Activated CD8-positive, alpha-beta memory T cell treated with anti-CD3 and anti-CD28 coated beads, Interleukin-2, amount 10 ng/mL, durations not matched to agents 7 days and 5 days (primary cell): ENCODE measurements at regions of chr5 and their contacts with region 1.

Region 1: DNA sequence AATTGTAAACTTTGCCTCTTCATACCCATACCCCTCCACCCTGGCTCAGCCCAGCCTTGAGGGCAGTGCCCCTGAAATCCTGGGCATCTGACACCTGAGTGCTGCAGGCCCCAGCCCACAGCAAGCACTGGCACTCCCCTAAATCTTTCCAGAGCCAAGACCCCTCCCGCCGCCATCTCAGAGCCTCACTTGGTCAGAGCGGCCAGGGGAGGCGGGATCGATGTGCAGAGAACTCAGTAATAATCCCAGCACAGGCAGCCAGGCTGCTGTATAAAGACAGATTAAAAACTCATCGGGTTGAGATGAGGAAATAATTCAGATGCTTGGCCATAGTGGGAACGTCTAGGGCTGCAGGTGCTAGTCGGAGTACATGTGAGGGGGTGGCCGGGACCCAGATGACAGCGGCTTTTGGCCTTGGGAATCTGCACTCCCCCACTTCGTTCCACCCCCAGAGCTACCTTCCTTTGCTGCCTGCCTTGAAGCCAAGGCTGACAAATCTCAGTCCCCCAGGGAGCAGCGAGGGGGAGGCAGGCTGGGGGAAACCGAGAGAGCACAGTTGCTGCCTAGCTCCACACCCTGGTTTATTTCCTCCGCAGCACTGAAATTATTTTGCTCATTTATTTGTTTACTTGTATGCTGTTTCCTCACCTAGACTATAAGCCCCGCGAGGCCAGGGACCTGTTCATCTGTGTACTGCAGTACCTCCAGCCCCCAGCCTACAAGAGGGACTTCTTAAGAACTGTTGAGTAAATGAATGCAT is 19.5 kb upstream of the ARAP3 start:
- DNase-seq: no peak
- ATAC-seq: peak; percentile 28
- H3K4me3 Mint-ChIP-seq: peak overlapping the region; percentile 62
- H3K27ac Mint-ChIP-seq: no peak overlapping the region
- H3K4me1 Mint-ChIP-seq: peaks cover 22% of the 10 kb centered on the region
- H3K27me3 Mint-ChIP-seq: peaks cover 42% of the 10 kb centered on the region

Region 2: GRCh38 chr5:141811287-141812155 is 110.0 kb after region 1 on chr5:
- CTCF ChIA-PET with region 1: interaction called, 74 read pairs
- DNase-seq: peak; percentile 49
- ATAC-seq: peak; percentile 75
- H3K4me3 Mint-ChIP-seq: no peak overlapping the region
- H3K27ac Mint-ChIP-seq: no peak overlapping the region
- H3K4me1 Mint-ChIP-seq: peaks cover 5% of the 10 kb centered on the region
- H3K27me3 Mint-ChIP-seq: peaks cover 64% of the 10 kb centered on the region

Region 3: DNA sequence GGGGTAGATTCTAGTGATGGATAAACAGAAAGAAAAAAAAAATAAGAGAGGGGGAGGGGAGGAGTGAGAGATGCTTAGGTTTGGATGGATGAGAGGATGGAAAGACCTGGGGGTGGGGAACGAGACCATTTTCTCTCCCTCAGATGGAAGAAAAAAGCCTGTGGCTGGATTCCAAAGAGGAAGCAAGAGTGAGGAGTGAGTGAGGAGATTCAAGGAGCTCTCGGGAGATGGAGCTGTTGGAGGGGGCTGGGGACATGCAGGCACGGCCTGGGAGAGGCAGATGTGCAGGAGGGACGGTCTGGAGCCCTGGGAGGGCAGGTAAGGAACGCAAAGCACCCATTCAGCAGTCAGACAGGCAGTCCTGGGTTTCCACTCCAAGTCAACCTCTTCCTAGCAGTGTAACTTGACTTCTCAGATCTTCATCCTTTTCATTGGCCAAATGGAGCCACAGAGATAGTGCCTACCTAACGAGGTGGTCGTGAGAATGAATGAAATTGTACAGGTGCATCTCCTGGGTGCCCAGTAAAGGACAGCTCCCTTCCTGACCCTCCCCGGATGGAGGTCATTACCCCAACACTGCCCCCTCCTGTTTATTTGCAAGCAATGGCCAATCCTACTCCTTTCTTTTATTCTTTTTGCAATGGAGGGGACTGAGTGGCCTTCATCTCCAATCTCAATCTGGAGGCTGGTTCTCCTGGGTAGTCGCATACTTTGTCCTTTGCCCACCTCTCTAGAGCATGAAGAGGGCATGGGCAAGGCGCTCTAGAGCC is 124.4 kb after region 1 on chr5:
- CTCF ChIA-PET with region 1: interaction called, 19 read pairs
- DNase-seq: no peak
- ATAC-seq: no peak
- H3K4me3 Mint-ChIP-seq: no peak overlapping the region
- H3K27ac Mint-ChIP-seq: no peak overlapping the region
- H3K4me1 Mint-ChIP-seq: peaks cover 16% of the 10 kb centered on the region
- H3K27me3 Mint-ChIP-seq: peaks cover 15% of the 10 kb centered on the region

Region 4: DNA sequence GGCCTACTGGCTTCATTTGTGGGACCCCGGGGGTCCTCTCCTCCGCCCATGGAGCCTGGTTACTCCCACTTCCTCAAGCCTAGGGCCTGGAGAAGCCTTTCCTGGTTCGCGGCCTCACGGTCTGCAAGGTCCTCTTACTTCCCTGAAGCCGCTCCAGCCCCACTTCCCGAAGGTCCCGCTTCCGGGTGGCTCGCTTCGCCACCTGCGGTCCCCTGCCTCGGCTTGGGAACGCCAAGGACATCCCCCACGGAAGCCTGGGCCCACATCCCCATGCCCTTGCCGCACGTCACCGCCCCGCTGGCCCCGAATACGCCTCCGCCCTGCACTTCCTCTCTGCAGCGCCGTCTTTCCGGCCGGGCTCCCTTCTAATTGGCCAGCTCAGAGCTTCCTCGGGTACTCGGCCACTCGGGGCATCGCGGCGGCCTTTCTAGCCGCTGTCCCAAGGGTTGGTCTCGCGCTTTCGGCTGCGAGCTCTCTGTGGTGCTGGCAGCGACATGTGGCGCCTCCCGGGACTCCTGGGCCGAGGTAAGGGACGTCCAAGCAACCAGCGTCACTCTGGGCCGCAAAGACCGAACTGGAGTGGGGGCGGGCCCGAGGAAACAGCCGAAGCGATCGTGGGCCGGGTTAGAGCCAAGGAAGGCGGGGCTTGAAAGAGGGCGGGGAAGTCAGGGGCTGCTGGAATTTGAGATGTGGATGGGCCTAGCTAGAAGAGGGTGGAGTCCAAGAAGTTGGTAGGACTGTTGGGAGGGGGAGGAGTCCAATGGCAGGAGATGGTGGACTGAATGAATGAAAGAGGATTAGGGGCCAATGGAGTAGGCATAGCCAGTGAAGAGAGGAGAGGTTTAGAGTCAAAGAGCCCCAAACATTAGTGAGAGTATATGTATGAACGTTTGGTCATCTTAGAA is 222.2 kb after region 1 on chr5 and contains the start of gene DELE1:
- CTCF ChIA-PET with region 1: interaction called, 11 read pairs
- DNase-seq: peak; percentile 96
- ATAC-seq: peak; percentile 98
- H3K4me3 Mint-ChIP-seq: peak within 1 kb of the TSS; percentile 85
- H3K27ac Mint-ChIP-seq: peak within 1 kb of the TSS; percentile 91
- H3K4me1 Mint-ChIP-seq: peaks cover 26% of the 10 kb centered on the region
- H3K27me3 Mint-ChIP-seq: no peaks in the 10 kb centered on the region
- total RNA-seq, gene DELE1: 65.4 to 68.7 TPM